ENCODE measurements at regions of chr10 and their contacts with region 1.

Region 1: GRCh38 chr10:101297901-101298486 is 56.0 kb upstream of the BTRC start:
- DNase-seq: peak; percentile 75
- CTCF ChIP-seq: peak; percentile 89

Region 2: GRCh38 chr10:101130984-101131961 is 166.7 kb before region 1 on chr10 and contains the start of gene TLX1:
- CTCF ChIA-PET with region 1: no interaction called
- POLR2A ChIA-PET with region 1: no interaction called
- DNase-seq: no peak
- CTCF ChIP-seq: no peak

Region 3: GRCh38 chr10:101258179-101258885 is 39.7 kb before region 1 on chr10:
- CTCF ChIA-PET with region 1: no interaction called
- POLR2A ChIA-PET with region 1: no interaction called
- DNase-seq: no peak
- CTCF ChIP-seq: no peak

Region 4: GRCh38 chr10:101310529-101311184 is 12.7 kb after region 1 on chr10:
- CTCF ChIA-PET with region 1: interaction called, 44 read pairs
- POLR2A ChIA-PET with region 1: no interaction called
- DNase-seq: no peak
- CTCF ChIP-seq: no peak

Measured in GM10248 (cell line).